Activated naive CD4-positive, alpha-beta T cell treated with anti-CD3 and anti-CD28 coated beads for 36 hours (primary cell): ENCODE measurements at regions of chr12 and their contacts with region 1.

Region 1: GRCh38 chr12:46661110-46661845 is 164.5 kb downstream of the SLC38A4 start:
- DNase-seq: peak; percentile 25
- H3K4me3 Mint-ChIP-seq: no peak overlapping the region
- H3K27ac Mint-ChIP-seq: no peak overlapping the region
- H3K4me1 Mint-ChIP-seq: peaks cover 29% of the 10 kb centered on the region
- H3K27me3 Mint-ChIP-seq: no peaks in the 10 kb centered on the region

Region 2: DNA sequence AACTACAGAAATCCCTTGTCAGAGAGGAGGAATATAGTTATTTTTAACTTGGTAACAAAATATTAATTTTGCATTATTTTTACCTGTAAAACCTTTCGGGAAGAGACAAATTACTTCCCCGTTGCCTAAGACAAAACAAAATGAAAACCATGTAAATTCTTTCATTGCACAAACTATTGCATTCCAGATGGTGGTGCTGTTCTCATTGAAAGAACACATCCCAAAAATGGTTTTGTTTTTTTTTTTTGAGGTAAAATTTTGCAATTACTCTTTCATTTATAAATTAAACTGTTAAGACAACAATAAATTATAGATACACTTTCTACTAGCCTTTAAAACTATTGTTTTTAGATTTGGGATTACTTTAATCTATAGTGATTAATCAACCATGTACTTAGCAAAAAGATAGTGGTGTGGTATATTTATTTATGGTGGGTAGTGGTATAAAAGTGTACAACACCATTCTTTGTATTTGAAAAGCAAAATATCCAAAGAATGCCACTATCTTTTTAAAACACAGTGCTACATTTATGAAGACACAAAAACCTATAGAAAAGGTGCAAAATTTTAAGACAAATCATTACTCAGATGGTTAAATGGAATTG is 507.9 kb before region 1 on chr12:
- CTCF ChIA-PET with region 1: no interaction called
- intact Hi-C with region 1: loop called (anchors 1 kb)
- DNase-seq: no peak
- H3K4me3 Mint-ChIP-seq: no peak overlapping the region
- H3K27ac Mint-ChIP-seq: no peak overlapping the region
- H3K4me1 Mint-ChIP-seq: peaks cover 12% of the 10 kb centered on the region
- H3K27me3 Mint-ChIP-seq: peaks cover under 1% of the 10 kb centered on the region

Region 3: DNA sequence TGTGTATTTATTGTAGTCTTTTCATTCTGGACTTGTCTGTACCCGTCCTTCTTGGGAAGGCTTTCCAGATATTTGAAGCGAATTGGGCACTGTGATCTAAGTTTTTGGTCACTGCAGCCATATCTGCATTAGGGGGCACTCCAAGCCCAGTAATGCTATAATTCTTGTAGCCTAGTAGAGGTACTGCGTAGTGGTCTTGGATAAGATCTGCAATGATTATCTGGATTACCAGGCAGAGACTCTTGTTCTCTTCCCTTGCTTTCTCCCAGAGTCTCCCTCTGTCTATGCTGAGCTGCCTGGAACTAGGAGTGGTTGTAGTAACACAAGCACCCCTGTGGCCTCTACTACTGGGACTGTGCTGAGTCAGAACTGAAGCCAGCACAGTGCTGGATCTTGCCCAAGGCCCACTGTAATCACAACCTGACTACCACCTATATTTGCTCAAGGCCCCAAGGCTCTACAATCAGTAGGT is 318.7 kb before region 1 on chr12:
- CTCF ChIA-PET with region 1: interaction called, 3 read pairs
- intact Hi-C with region 1: loop called (anchors 1 kb)
- DNase-seq: peak; percentile 48
- H3K4me3 Mint-ChIP-seq: no peak overlapping the region
- H3K27ac Mint-ChIP-seq: no peak overlapping the region
- H3K4me1 Mint-ChIP-seq: peaks cover 5% of the 10 kb centered on the region
- H3K27me3 Mint-ChIP-seq: no peaks in the 10 kb centered on the region

Region 4: DNA sequence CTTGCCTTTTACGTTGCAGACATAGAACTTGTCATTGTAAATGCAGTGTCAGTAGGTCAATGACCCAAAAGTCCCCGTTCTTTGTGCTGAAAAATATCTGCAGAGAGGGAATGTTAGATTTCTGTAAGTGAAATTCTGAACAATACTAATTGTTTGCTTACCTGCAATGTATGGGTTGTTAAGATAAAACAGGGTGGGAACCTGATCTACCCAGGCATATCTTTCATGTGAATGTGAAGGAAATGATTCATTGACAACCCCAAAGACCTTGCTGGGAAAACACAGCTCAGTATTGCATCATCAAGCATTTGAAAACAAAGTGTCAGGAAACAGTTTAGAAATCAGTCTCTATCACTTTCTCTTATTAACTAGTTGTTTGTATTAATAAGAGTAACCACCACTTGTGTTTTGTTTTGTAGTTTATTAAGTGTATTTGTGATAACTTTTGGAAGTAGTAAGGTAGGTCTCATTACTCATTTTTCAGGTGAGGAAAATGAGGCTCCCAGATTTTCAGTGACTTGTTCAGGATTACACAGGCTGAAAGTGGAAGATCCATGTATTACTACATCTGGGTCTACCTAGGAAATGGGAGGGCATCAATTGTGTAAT is 230.8 kb before region 1 on chr12:
- CTCF ChIA-PET with region 1: no interaction called
- intact Hi-C with region 1: loop called (anchors 1 kb)
- DNase-seq: peak; percentile 64
- H3K4me3 Mint-ChIP-seq: peak overlapping the region; percentile 53
- H3K27ac Mint-ChIP-seq: peak overlapping the region; percentile 82
- H3K4me1 Mint-ChIP-seq: peaks cover 30% of the 10 kb centered on the region
- H3K27me3 Mint-ChIP-seq: no peaks in the 10 kb centered on the region

Region 5: DNA sequence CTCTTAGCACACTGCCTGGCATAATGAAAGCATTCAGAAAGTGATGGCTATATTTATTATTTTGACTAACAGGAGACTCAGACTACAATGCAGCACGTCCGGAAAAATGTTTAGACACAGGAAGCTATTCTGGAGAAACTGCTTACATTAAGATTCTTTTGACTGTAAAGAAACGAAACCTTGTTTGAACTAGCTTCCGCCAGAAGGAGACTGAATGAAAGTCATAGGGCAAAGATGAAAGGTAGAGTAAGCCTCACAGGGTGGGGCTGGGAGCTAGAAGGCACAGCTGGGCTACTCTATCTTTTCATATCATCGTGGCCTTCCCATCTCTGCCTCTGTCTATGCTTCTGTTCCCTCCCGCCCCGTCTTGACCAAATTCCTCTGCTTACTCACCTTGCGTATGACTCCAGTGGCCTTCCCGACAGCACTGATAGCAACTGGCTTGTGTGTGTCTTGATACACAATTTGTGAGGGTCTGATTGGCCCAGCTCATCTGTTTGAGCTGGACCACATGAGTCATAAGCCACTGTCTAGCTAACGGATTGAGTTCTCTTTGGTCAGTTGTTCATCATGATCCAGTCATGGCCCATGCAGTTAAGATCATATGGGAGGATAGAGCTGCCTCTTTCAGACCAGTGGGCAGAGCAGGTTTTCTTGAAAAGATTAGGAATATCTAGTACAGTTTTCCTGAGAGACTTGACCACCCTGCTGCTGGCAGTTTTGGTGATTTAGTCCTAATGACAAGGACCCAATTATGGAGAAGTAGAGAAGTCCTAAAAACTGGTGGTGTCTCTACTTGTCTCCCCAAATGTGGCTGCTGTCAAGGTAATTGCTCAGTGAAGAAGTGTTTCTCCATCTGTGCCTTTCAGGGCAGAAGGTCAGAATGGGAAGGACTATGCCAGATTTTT is 137.2 kb before region 1 on chr12:
- CTCF ChIA-PET with region 1: interaction called, 3 read pairs
- intact Hi-C with region 1: loop called (anchors 1 kb)
- DNase-seq: peak; percentile 76
- H3K4me3 Mint-ChIP-seq: peak overlapping the region; percentile 61
- H3K27ac Mint-ChIP-seq: peak overlapping the region; percentile 81
- H3K4me1 Mint-ChIP-seq: peaks cover 38% of the 10 kb centered on the region
- H3K27me3 Mint-ChIP-seq: no peaks in the 10 kb centered on the region